Sigmoid colon (tissue), 7 donors: ENCODE measurements at regions of chr22 and their contacts with region 1.

Region 1: DNA sequence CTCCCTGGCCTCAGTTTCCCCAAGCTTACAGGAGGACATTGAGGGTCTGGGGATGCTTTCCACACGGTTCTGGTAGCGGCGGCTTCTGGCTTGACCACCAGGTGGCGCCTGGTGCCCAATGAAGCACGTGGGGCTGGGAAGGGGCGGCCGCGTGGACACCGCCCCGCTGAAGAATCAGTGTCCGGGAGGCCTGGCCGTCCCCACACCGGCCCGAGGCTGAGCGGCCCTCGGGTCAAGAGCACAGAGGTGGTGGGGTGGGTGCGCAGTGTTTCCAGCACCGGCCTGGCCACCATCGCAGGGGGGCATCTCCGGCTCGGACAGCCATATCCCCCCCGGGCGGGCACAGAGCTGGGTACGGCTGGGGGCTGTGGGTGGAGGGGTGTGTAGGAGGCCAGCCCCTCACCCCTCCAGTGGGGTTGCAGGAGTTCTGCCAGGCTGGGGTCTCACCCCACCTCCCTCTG is 27.8 kb upstream of the PPARA start:
- DNase-seq: peak; percentile 88
- H3K4me3 ChIP-seq: peak overlapping the region in 1 of 4 donors; percentile 16
- H3K27ac ChIP-seq: no peak overlapping the region
- H3K4me1 ChIP-seq: peaks cover 0 to 22% (median 18%) of the 10 kb centered on the region in 4 donors
- H3K27me3 ChIP-seq: no peaks in the 10 kb centered on the region
- CTCF ChIP-seq: peak; percentile 95 to 97 (median 96)
- EP300 ChIP-seq: no peak
- POLR2A ChIP-seq: no peak

Region 2: GRCh38 chr22:46250035-46250782 is 127.7 kb after region 1 on chr22 and contains the start of gene CDPF1:
- intact Hi-C with region 1: loop called (anchors 2 kb)
- DNase-seq: peak; percentile 94
- H3K4me3 ChIP-seq: peak within 1 kb of the TSS; percentile 78 to 91 (median 86)
- H3K27ac ChIP-seq: peak within 1 kb of the TSS; percentile 86 to 91 (median 90)
- H3K4me1 ChIP-seq: peaks cover 0 to 45% (median 30%) of the 10 kb centered on the region in 4 donors
- H3K27me3 ChIP-seq: no peaks in the 10 kb centered on the region
- CTCF ChIP-seq: no peak
- EP300 ChIP-seq: no peak
- POLR2A ChIP-seq: peak; percentile 51 to 53
- total RNA-seq, gene CDPF1: 15.8 to 18.9 (median 17.5) TPM

Region 3: DNA sequence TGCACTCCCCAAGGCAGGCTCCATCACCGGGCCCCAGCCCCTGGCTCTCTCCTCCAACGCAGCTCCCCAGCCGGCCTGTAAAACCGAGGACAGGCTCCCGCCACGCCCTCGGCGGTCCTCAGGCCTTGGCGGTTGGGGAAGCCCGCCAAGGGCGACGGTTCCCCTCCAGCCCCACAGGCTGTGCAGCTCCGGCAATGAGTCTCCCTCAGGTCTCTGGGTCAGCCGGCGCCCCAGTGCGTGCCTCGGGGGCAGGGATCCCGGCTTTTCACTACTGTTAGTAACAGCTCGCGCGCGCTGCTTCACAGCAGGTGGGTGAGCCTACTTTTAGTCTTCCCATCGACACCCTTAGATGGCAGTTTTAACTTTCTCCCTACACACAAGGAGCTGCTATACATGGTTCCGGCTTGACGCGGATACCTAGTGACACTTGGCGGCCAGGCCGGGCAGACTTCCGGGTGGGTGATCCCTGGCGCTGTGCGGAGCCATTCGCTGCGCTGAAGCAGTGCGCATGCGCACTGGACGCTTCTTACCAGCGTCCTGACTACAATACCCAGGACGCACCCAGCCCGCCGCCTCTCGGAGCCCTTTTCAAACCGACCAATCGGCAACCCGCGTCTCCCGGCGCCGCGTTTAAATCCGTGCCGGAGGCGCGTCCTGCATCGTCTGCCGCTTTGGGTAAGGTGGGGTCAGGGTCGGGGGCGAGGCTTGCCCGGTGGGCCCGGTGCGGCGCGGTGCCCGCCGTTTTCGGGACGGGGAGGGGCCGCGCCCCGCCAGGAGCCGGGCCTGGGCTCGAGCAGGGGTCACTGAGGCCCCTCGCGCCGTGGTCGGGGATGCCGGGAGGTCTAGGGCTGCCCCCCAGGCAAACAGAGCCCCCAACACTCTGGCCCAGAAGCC is 174.0 kb after region 1 on chr22 and contains the start of gene GTSE1:
- intact Hi-C with region 1: loop called (anchors 2 kb)
- DNase-seq: peak; percentile 99
- H3K4me3 ChIP-seq: peak within 1 kb of the TSS; percentile 35 to 62 (median 56)
- H3K27ac ChIP-seq: peak within 1 kb of the TSS; percentile 89 to 96 (median 94)
- H3K4me1 ChIP-seq: peaks cover 0 to 19% (median 16%) of the 10 kb centered on the region in 4 donors
- H3K27me3 ChIP-seq: no peaks in the 10 kb centered on the region
- CTCF ChIP-seq: no peak
- EP300 ChIP-seq: no peak
- POLR2A ChIP-seq: peak in 1 of 2 donors; percentile 33
- total RNA-seq, gene GTSE1: 0.27 to 0.36 (median 0.28) TPM in 3 of 4 donors, not detected in the other

Region 4: DNA sequence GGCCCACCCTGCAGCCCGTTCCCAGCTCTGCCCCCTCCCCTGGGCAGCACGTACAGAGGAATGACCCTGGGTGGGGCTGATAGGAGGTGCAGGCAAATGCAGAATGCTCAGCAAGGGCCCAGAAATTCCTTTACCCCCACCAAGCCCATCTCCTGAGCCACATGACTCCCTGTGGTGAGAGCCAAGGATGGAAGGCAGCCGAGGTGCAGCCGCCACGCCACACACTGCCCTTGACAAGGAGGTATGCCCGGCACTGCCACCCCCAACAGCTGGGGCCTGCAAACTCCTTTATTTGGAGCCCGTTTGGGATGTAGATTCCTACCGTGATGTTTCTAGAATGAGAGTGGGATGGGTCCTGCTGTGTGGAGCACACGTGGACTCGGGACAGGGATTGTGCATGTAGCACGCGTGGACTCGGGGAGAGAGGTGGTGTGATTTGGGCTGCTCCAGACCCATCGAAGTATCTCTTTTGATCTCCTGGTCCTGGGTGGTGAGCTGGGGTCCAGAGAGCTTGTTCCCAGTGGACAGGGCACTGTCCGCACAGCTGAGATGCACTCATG is 187.1 kb after region 1 on chr22:
- intact Hi-C with region 1: loop called (anchors 1 kb)
- DNase-seq: no peak
- H3K4me3 ChIP-seq: no peak overlapping the region
- H3K27ac ChIP-seq: no peak overlapping the region
- H3K4me1 ChIP-seq: no peaks in the 10 kb centered on the region
- H3K27me3 ChIP-seq: no peaks in the 10 kb centered on the region
- CTCF ChIP-seq: no peak
- EP300 ChIP-seq: no peak
- POLR2A ChIP-seq: no peak

Region 5: GRCh38 chr22:46542011-46542985 is 419.8 kb after region 1 on chr22:
- intact Hi-C with region 1: loop called (anchors 5 kb)
- DNase-seq: peak; percentile 78
- H3K4me3 ChIP-seq: no peak overlapping the region
- H3K27ac ChIP-seq: no peak overlapping the region
- H3K4me1 ChIP-seq: peaks cover 0 to 27% (median 24%) of the 10 kb centered on the region in 4 donors
- H3K27me3 ChIP-seq: peaks cover 11 to 29% (median 18%) of the 10 kb centered on the region in 3 donors
- CTCF ChIP-seq: peak; percentile 56 to 92 (median 88)
- EP300 ChIP-seq: no peak
- POLR2A ChIP-seq: no peak